ENCODE measurements at regions of chr14 and their contacts with region 1.

Region 1: DNA sequence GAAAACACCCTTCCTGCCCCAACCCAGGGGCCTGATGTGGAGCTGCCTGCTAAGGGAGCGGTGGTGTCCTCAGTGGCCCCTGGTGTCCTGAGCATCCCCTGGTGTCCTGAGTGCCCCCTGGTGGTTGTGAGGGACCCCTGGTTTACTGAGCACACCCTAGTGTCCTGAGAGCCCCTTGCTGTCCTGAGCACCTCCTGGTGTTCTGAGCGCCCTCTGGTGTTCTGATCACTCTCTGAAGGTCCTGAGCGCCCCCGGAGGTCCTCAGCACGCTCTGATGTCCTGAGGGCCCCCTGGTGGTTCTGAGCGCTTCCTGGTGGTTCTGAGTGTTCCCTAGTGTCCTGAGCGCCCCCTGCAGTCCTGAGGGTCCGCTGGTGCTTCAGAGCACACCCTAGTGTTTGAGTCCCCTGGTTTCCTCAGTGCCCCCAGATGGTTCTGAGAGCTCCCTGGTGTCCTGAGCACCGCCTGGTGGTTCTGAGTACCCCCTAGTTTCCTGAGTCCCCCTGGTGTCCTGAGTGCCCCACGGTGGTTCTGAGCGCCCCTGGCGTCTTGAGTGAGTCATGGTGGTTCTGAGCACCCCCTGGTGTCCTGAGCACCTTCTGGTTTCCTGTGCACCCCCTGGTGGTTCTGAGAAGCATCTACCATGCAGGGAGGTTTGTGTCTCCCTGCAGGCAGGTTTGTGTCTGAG is 1004.2 kb downstream of the TMEM121 start:
- DNase-seq: peak; percentile 69
- ATAC-seq: peak; percentile 79
- H3K4me3 ChIP-seq: no peak overlapping the region
- H3K4me3 Mint-ChIP-seq: no peak overlapping the region
- H3K27ac ChIP-seq: no peak overlapping the region
- H3K27ac Mint-ChIP-seq: no peak overlapping the region
- H3K4me1 ChIP-seq: no peaks in the 10 kb centered on the region
- H3K4me1 Mint-ChIP-seq: peaks cover 3% of the 10 kb centered on the region
- H3K27me3 ChIP-seq: peaks cover 0 to 3% (median 0%) of the 10 kb centered on the region in 4 experiments
- H3K27me3 Mint-ChIP-seq: peaks cover 14% of the 10 kb centered on the region
- CTCF ChIP-seq: peak; percentile 63

Region 2: GRCh38 chr14:106163306-106163705 is 367.3 kb before region 1 on chr14:
- CTCF ChIA-PET with region 1: no interaction called
- POLR2A ChIA-PET with region 1: no interaction called
- intact Hi-C with region 1: no loop called
- DNase-seq: no peak
- ATAC-seq: no peak
- H3K4me3 ChIP-seq: no peak overlapping the region
- H3K4me3 Mint-ChIP-seq: no peak overlapping the region
- H3K27ac ChIP-seq: no peak overlapping the region
- H3K27ac Mint-ChIP-seq: no peak overlapping the region
- H3K4me1 ChIP-seq: no peaks in the 10 kb centered on the region
- H3K4me1 Mint-ChIP-seq: peaks cover 13% of the 10 kb centered on the region
- H3K27me3 ChIP-seq: peaks cover 0 to 5% (median 0%) of the 10 kb centered on the region in 4 experiments
- H3K27me3 Mint-ChIP-seq: peaks cover 21% of the 10 kb centered on the region
- CTCF ChIP-seq: no peak

Region 3: DNA sequence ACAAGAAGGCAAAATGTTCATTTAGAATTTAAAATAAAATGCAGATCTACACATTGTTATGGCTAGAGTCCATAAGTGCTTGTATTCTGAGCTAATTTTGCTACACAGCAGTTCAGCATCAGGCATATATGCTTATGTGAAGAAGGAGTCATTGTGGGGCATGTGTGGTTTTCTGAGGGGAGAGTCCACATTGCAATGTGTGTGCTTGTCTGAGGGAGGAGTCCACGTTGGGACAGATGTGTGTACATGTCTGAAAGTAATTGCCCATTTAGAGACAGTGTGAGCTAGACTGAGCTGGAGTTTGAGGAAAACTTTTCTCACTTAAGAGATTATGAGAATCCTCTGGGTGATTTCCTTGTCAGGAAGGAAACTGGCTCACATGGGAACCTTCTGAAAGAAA is 236.2 kb before region 1 on chr14:
- CTCF ChIA-PET with region 1: no interaction called
- POLR2A ChIA-PET with region 1: no interaction called
- intact Hi-C with region 1: no loop called
- DNase-seq: no peak
- ATAC-seq: no peak
- H3K4me3 ChIP-seq: no peak overlapping the region
- H3K4me3 Mint-ChIP-seq: no peak overlapping the region
- H3K27ac ChIP-seq: no peak overlapping the region
- H3K27ac Mint-ChIP-seq: no peak overlapping the region
- H3K4me1 ChIP-seq: peaks cover 0 to 3% of the 10 kb centered on the region in 2 donors
- H3K4me1 Mint-ChIP-seq: peaks cover 14% of the 10 kb centered on the region
- H3K27me3 ChIP-seq: no peaks in the 10 kb centered on the region
- H3K27me3 Mint-ChIP-seq: peaks cover 8% of the 10 kb centered on the region
- CTCF ChIP-seq: no peak

Region 4: GRCh38 chr14:106508216-106508615 is 22.3 kb before region 1 on chr14:
- CTCF ChIA-PET with region 1: interaction called, 10 read pairs
- POLR2A ChIA-PET with region 1: no interaction called
- intact Hi-C with region 1: no loop called
- DNase-seq: no peak
- ATAC-seq: no peak
- H3K4me3 ChIP-seq: no peak overlapping the region
- H3K4me3 Mint-ChIP-seq: no peak overlapping the region
- H3K27ac ChIP-seq: no peak overlapping the region
- H3K27ac Mint-ChIP-seq: no peak overlapping the region
- H3K4me1 ChIP-seq: peaks cover 21 to 38% of the 10 kb centered on the region in 2 donors
- H3K4me1 Mint-ChIP-seq: peaks cover 30% of the 10 kb centered on the region
- H3K27me3 ChIP-seq: peaks cover 0 to 14% (median 5%) of the 10 kb centered on the region in 4 experiments
- H3K27me3 Mint-ChIP-seq: peaks cover 36% of the 10 kb centered on the region
- CTCF ChIP-seq: no peak

Region 5: GRCh38 chr14:106518054-106518943 is 12.3 kb before region 1 on chr14:
- CTCF ChIA-PET with region 1: interaction called, 42 read pairs
- POLR2A ChIA-PET with region 1: interaction called, 3 read pairs
- intact Hi-C with region 1: no loop called
- DNase-seq: peak; percentile 85
- ATAC-seq: peak; percentile 79
- H3K4me3 ChIP-seq: no peak overlapping the region
- H3K4me3 Mint-ChIP-seq: peak overlapping the region; percentile 49
- H3K27ac ChIP-seq: peak overlapping the region in 1 of 2 donors; percentile 30
- H3K27ac Mint-ChIP-seq: peak overlapping the region; percentile 41
- H3K4me1 ChIP-seq: peaks cover 15 to 21% of the 10 kb centered on the region in 2 donors
- H3K4me1 Mint-ChIP-seq: peaks cover 20% of the 10 kb centered on the region
- H3K27me3 ChIP-seq: no peaks in the 10 kb centered on the region
- H3K27me3 Mint-ChIP-seq: peaks cover 13% of the 10 kb centered on the region
- CTCF ChIP-seq: peak; percentile 73

Region 6: GRCh38 chr14:106556665-106557289 is 26.2 kb after region 1 on chr14:
- CTCF ChIA-PET with region 1: interaction called, 11 read pairs
- POLR2A ChIA-PET with region 1: no interaction called
- intact Hi-C with region 1: no loop called
- DNase-seq: peak; percentile 77
- ATAC-seq: peak; percentile 75
- H3K4me3 ChIP-seq: no peak overlapping the region
- H3K4me3 Mint-ChIP-seq: no peak overlapping the region
- H3K27ac ChIP-seq: no peak overlapping the region
- H3K27ac Mint-ChIP-seq: peak overlapping the region; percentile 50
- H3K4me1 ChIP-seq: no peaks in the 10 kb centered on the region
- H3K4me1 Mint-ChIP-seq: peaks cover 2% of the 10 kb centered on the region
- H3K27me3 ChIP-seq: peaks cover 0 to 4% (median 0%) of the 10 kb centered on the region in 4 experiments
- H3K27me3 Mint-ChIP-seq: peaks cover 11% of the 10 kb centered on the region
- CTCF ChIP-seq: peak; percentile 85

Region 7: DNA sequence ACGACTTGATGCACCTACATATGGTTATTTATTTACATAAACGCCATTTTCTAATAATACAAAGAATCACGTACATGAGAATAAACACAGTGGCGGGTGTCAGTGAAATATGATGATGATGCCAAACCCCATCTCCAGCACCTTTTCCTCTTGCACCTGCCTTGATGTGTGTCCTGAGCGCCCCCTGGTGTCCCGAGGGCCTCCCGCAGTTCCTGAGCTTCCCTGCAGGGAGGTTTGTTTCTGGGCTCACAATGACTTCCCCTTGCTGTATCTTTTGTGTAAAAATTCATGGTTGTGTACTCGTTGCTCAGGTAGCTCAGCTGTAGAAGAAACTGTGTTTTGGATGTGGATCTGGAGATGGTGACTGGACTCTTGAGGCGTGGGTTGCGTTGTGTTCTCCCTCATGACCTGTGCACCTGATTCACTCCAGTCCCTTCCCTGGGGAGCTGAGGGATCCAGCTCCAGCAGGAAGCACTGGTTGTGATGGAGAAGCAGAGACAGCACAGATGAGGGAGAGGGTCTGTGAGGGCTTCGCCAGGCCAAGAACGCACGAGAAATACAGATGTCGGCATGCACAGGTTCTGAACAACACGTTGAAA is 33.6 kb after region 1 on chr14:
- CTCF ChIA-PET with region 1: interaction called, 27 read pairs
- POLR2A ChIA-PET with region 1: no interaction called
- intact Hi-C with region 1: no loop called
- DNase-seq: peak; percentile 82
- ATAC-seq: peak; percentile 73
- H3K4me3 ChIP-seq: no peak overlapping the region
- H3K4me3 Mint-ChIP-seq: no peak overlapping the region
- H3K27ac ChIP-seq: no peak overlapping the region
- H3K27ac Mint-ChIP-seq: peak overlapping the region; percentile 34
- H3K4me1 ChIP-seq: no peaks in the 10 kb centered on the region
- H3K4me1 Mint-ChIP-seq: peaks cover 3% of the 10 kb centered on the region
- H3K27me3 ChIP-seq: peaks cover 0 to under 1% (median 0%) of the 10 kb centered on the region in 4 experiments
- H3K27me3 Mint-ChIP-seq: peaks cover 12% of the 10 kb centered on the region
- CTCF ChIP-seq: peak; percentile 74

Measured in B cell (primary cell).